Heart right ventricle (tissue), 16 donors: ENCODE measurements at regions of chr5 and their contacts with region 1.

Region 1: GRCh38 chr5:126339215-126339805 is 83.9 kb upstream of the GRAMD2B start:
- DNase-seq: peak in 1 of 2 donors; percentile 49
- ATAC-seq: peak in 2 of 8 donors; percentile 43 to 49
- H3K4me3 ChIP-seq: no peak overlapping the region
- H3K27ac ChIP-seq: no peak overlapping the region
- H3K4me1 ChIP-seq: peaks cover 0 to 4% (median 0%) of the 10 kb centered on the region in 9 donors
- H3K27me3 ChIP-seq: peaks cover 0 to 11% (median 0%) of the 10 kb centered on the region in 7 donors
- CTCF ChIP-seq: peak; percentile 66 to 93 (median 89)

Region 2: DNA sequence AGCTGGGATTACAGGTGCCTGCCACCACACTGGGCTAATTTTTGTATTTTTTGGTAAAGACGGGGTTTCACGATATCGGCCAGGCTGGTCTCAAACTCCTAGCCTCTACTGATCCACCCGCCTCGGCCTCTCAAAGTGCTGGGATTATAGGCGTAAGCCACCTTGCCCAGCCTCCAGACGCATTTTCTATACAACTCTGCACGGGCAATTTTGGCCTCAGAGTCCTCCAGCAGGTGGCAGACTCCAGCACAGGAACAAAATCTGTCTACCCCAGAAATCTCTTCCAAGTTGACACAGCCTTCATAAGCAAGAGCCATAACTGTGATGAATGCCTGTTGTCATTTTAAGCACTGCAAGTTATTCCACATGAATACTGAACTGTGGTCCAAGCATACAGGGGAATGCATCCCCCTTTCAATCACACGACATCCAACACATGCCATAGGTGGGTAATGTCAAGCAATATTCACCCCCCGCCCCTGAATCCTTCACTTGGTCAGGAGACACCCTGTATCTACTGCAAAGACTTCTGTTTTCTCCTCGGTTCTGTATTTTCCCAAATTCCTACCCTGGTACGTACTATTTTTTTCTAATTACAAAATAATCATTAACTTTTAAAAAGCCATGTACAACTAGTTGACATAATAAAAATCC is 204.9 kb after region 1 on chr5:
- intact Hi-C with region 1: loop called in 3 of 10 experiments (anchors 1 to 5 kb)
- DNase-seq: no peak
- ATAC-seq: no peak
- H3K4me3 ChIP-seq: no peak overlapping the region
- H3K27ac ChIP-seq: no peak overlapping the region
- H3K4me1 ChIP-seq: peaks cover 0 to 1% (median 0%) of the 10 kb centered on the region in 9 donors
- H3K27me3 ChIP-seq: no peaks in the 10 kb centered on the region
- CTCF ChIP-seq: peak in 8 of 9 donors; percentile 9 to 50 (median 30)

Region 3: DNA sequence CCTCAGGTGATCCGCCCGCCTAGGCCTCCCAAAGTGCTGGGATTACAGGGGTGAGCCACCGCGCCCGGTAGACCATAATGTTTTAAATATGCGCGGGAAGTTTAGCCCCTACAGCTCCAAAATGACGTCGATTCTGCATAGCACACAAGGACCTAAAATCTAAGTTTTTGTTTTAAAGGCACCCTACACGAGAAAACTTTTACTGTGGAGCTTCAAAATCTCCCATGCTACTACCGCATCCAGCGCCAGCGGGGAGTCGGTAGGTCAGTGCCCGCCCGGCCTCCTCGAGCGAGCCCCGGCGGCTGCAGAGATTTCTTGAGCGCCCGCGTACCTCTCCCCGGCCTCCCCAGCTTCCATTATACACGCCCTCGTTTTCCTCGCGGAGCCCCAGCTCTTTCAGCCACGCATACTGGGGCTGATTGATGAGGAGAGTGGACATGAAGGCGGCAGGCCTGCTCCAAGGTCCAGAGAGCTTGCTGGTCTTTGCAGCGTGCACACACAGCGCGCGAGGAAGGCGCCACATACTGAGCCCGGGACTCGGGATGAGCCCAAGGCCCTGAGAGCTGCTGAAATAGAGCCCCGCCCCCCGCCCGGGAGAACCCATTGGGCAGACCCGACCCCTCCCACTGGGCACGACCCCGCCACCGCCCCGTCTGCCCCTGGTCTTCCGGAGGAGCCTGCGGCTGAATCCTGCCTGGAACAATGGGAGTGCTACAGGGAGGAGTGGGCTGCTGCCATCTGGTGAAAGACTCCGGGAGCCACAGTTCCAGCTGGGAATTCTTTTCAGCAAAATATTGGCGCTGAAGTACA is 255.6 kb after region 1 on chr5 and contains the start of gene ALDH7A1:
- intact Hi-C with region 1: loop called in 5 of 10 experiments (anchors 2 to 5 kb)
- DNase-seq: peak; percentile 92 to 94
- ATAC-seq: peak; percentile 93 to 98 (median 97)
- H3K4me3 ChIP-seq: peak within 1 kb of the TSS; percentile 59 to 75 (median 68)
- H3K27ac ChIP-seq: peak within 1 kb of the TSS in 9 of 10 donors; percentile 67 to 90 (median 76)
- H3K4me1 ChIP-seq: peaks cover 5 to 21% (median 13%) of the 10 kb centered on the region in 9 donors
- H3K27me3 ChIP-seq: no peaks in the 10 kb centered on the region
- CTCF ChIP-seq: peak in 8 of 9 donors; percentile 25 to 67 (median 47)
- total RNA-seq, gene ALDH7A1: 36.6 to 65.7 (median 53.5) TPM

Region 4: GRCh38 chr5:126600631-126601511 is 261.6 kb after region 1 on chr5 and contains the start of gene PHAX:
- intact Hi-C with region 1: loop called in 5 of 10 experiments (anchors 2 to 5 kb)
- DNase-seq: peak; percentile 74 to 85
- ATAC-seq: peak; percentile 95 to 99 (median 97)
- H3K4me3 ChIP-seq: peak within 1 kb of the TSS; percentile 85 to 100 (median 95)
- H3K27ac ChIP-seq: peak within 1 kb of the TSS; percentile 30 to 92 (median 86)
- H3K4me1 ChIP-seq: peaks cover 13 to 46% (median 36%) of the 10 kb centered on the region in 9 donors
- H3K27me3 ChIP-seq: no peaks in the 10 kb centered on the region
- CTCF ChIP-seq: peak; percentile 54 to 90 (median 72)
- total RNA-seq, gene PHAX: 23.4 to 38.5 (median 28.0) TPM

Region 5: GRCh38 chr5:126776497-126777256 is 437.4 kb after region 1 on chr5 and contains the start of gene LMNB1:
- intact Hi-C with region 1: loop called in 1 of 10 experiments (anchors 5 kb)
- DNase-seq: peak; percentile 93 to 94
- ATAC-seq: peak; percentile 94 to 97 (median 96)
- H3K4me3 ChIP-seq: peak within 1 kb of the TSS; percentile 53 to 90 (median 74)
- H3K27ac ChIP-seq: peak within 1 kb of the TSS; percentile 36 to 92 (median 84)
- H3K4me1 ChIP-seq: peaks cover 0 to 36% (median 17%) of the 10 kb centered on the region in 9 donors
- H3K27me3 ChIP-seq: no peaks in the 10 kb centered on the region
- CTCF ChIP-seq: peak in 2 of 9 donors; percentile 13 to 17
- total RNA-seq, gene LMNB1: 0.78 to 14.7 (median 1.4) TPM